Activated naive CD4-positive, alpha-beta T cell treated with anti-CD3 and anti-CD28 coated beads for 36 hours (primary cell): ENCODE measurements at regions of chr19 and their contacts with region 1.

Region 1: DNA sequence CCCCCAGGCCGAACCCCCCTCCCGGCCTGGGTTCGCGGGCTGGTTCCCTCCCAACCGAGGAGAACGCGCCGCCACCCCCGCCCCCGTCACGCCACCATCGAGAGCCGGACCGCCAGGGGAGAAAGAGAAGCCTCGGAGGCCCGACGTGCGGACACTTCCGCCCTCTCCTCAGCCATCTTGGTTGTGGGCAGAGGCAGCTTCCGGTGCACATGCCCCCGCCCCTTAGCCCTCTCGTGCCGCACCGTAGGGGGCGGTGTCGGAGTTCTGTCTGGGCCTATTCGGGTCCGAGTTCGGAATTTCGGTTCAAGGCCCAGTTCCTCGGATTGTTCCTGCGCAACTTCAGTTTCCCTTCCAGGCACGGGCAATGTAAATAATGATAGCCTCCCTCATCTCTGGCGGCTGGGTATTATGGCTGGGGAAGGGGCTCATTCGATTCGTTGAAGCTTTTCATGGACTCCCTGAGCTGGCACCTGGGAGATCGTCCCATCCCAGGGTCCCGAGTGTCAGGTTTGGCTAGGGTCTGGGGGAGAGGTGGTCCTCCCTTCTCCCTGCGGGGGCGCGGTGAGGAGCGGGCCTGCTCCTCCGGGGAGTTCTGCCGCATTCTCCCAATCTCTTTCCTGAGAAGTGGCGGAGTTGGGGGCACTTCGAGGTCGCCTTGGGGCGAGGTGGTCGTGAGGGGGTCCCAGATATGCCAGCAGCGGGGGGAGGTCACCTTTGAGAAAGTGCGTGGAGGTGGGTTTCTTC is at the starts of genes IER2 and STX10:
- DNase-seq: peak; percentile 96
- H3K4me3 Mint-ChIP-seq: peak within 1 kb of the TSS; percentile 99
- H3K27ac Mint-ChIP-seq: peak within 1 kb of the TSS; percentile 98
- H3K4me1 Mint-ChIP-seq: peaks cover 19% of the 10 kb centered on the region
- H3K27me3 Mint-ChIP-seq: no peaks in the 10 kb centered on the region
- total RNA-seq, gene IER2: 120 to 123 TPM
- total RNA-seq, gene STX10: 48.3 to 48.9 TPM

Region 2: GRCh38 chr19:12736995-12737834 is 413.1 kb before region 1 on chr19 and contains the start of gene GET3:
- CTCF ChIA-PET with region 1: no interaction called
- intact Hi-C with region 1: loop called (anchors 5 kb)
- DNase-seq: peak; percentile 90
- H3K4me3 Mint-ChIP-seq: peak within 1 kb of the TSS; percentile 100
- H3K27ac Mint-ChIP-seq: peak within 1 kb of the TSS; percentile 90
- H3K4me1 Mint-ChIP-seq: peaks cover 31% of the 10 kb centered on the region
- H3K27me3 Mint-ChIP-seq: no peaks in the 10 kb centered on the region
- total RNA-seq, gene GET3: 47.7 TPM

Region 3: DNA sequence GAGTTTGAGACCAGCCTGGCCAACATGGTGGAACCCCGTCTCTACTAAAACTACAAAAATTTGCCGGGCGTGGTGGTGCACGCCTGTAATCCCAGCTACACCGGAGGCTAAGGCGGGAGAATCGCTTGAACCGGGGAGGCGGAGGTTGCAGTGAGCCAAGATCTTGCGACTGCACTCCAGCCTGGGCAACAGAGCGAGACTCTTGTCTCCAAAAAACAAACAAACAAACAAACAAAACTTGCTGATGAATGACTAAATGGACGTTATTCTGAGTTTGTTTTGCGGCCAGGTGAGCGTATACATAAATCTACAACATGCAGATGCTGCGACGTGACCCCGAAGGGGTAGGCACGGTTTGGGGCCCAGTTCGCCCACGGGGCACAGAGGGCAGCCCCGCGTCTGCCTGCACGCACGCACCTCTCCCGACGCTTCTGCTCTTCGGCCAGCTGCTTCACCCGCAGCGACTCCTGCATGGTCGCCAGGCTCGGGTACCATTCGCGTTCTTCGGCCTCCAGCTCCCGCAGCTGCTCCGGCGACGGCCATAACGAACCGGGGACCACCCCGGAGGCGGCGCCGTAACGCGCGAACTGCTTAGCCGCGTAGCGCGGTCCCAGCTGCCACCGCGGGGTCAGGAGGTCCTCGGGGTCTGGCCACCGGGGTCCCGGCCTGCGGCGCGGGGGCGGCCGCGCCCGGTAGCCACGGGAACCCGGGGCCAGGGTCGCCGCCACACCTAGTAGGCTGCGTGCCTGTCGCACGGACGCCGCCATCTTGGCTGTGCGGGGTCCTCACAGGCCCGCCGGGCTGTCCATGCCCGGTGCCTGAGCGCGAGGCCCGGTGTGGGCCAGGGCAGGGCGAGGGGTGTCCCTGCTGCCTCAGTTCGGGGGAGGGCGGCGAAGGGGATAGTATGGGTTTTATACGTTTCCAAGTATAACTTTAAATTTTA is 193.6 kb before region 1 on chr19 and contains the start of gene GADD45GIP1:
- CTCF ChIA-PET with region 1: no interaction called
- intact Hi-C with region 1: no loop called
- DNase-seq: peak; percentile 85
- H3K4me3 Mint-ChIP-seq: peak within 1 kb of the TSS; percentile 88
- H3K27ac Mint-ChIP-seq: peak within 1 kb of the TSS; percentile 96
- H3K4me1 Mint-ChIP-seq: peaks cover 43% of the 10 kb centered on the region
- H3K27me3 Mint-ChIP-seq: no peaks in the 10 kb centered on the region
- total RNA-seq, gene GADD45GIP1: 27.4 to 28.6 TPM

Region 4: GRCh38 chr19:13093407-13094105 is 56.8 kb before region 1 on chr19:
- CTCF ChIA-PET with region 1: no interaction called
- intact Hi-C with region 1: loop called (anchors 2 kb)
- DNase-seq: peak; percentile 90
- H3K4me3 Mint-ChIP-seq: no peak overlapping the region
- H3K27ac Mint-ChIP-seq: no peak overlapping the region
- H3K4me1 Mint-ChIP-seq: peaks cover 21% of the 10 kb centered on the region
- H3K27me3 Mint-ChIP-seq: peaks cover 29% of the 10 kb centered on the region

Region 5: DNA sequence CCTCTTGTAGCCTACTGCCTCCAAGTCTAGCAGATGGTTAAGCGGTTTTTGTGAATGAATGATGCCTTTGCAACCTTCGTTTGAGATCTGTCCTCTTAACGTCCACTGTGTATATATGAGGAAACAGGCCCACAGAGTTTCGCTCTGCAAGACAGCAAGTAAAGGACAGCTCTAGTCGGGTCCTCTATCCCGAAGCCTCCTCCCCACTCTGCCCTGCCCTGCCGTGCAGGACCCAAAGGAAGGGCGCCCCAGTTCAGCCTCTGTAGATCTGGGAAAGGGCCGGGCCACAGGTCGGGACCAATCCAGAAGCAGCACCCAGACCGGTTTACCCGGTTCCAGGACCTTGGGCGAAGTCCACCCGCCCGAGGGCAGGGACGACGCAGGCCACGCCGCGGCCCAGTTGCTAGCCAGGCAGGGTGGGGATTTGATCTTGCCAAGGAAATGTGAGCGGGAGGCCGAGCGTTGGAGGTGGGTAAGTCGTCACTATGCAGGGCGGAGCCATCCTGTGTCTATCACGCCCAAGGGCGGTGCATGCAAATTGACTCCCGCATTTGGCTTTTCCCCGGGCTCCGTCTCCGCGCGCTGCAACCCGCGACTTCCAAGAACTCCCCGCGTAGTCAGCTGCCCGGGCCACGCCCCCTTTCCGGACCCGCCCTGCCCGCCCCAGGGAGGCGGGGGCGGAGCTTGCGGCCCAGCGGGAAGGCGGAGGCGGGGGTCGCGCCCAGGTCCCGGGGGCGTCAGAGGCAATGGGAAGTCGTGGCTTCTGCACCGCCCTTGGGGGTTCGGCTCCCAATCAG is 12.4 kb after region 1 on chr19:
- CTCF ChIA-PET with region 1: interaction called, 7 read pairs
- intact Hi-C with region 1: loop called (anchors 1 kb)
- DNase-seq: peak; percentile 98
- H3K4me3 Mint-ChIP-seq: peak overlapping the region; percentile 79
- H3K27ac Mint-ChIP-seq: peak overlapping the region; percentile 97
- H3K4me1 Mint-ChIP-seq: peaks cover 65% of the 10 kb centered on the region
- H3K27me3 Mint-ChIP-seq: no peaks in the 10 kb centered on the region

Region 6: DNA sequence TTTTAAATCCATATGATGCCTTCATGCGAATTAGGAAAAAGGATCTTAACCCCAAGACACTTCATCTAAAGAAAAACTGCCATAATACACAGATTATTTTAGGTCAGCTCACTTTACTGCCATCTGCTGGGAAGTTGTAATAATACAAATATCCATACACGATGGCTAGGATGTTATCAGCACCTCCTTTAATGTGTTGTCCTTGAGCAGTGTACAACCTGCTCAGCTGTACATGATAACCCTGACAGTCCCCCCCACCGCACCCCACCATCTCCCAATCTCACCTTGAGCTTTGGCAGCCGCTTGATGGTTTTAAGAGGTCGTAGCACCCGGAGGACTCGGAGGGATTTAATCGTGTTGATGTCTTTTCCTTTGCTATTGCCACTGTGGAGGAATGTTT is 112.1 kb after region 1 on chr19:
- CTCF ChIA-PET with region 1: no interaction called
- intact Hi-C with region 1: loop called (anchors 1 kb)
- DNase-seq: no peak
- H3K4me3 Mint-ChIP-seq: no peak overlapping the region
- H3K27ac Mint-ChIP-seq: no peak overlapping the region
- H3K4me1 Mint-ChIP-seq: peaks cover 15% of the 10 kb centered on the region
- H3K27me3 Mint-ChIP-seq: peaks cover 9% of the 10 kb centered on the region

Region 7: DNA sequence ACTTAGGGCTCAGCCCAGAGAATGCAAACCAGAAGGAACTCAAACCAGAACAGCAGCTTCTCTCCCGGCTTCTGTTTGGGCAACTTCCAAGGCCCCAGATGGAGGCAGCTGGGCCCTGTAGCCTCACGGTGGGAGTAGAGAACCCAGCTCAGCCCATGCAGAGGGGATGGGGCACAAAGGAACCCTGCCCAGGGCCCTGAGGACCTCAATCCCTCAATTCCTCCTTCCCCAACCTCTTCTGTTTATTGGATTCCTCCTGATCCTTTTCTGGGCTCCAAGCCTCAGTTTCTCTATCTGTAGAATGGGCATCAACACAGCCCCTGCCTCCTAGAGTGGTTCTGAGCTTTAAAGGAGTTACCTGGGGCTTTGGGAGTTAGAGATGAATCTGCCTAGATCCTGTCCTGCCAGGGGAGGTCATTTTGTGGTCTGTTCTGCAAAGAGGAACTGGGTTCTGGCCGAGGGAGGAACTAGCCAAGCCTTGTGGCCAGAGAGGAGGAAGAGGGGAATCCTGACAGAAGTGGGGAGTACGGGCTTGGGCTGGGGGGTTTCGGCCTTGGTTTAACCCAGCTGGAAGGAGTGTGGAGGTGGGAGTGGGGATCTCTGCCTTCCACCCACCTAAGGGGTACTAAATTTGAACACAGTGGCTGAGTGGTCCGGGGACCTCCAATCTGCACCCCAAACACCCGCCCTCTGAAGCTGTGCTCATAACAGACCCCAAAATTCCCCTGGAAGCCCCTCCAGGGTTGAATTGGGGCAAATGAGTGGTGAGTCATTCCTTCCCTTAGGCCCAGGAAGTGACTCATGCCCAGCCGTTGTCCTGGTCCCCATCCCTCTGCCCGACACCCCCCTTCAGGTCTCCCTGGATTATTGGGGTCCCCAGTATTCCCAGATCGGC is 1233.5 kb after region 1 on chr19:
- CTCF ChIA-PET with region 1: no interaction called
- intact Hi-C with region 1: loop called (anchors 5 kb)
- DNase-seq: peak; percentile 79
- H3K4me3 Mint-ChIP-seq: peak overlapping the region; percentile 97
- H3K27ac Mint-ChIP-seq: peak overlapping the region; percentile 100
- H3K4me1 Mint-ChIP-seq: peaks cover 36% of the 10 kb centered on the region
- H3K27me3 Mint-ChIP-seq: no peaks in the 10 kb centered on the region